Activated CD8-positive, alpha-beta T cell treated with anti-CD3 and anti-CD28 coated beads for 36 hours (primary cell): ENCODE measurements at regions of chr2 and their contacts with region 1.

Region 1: GRCh38 chr2:162301151-162301804 is 17.2 kb downstream of the IFIH1 start:
- DNase-seq: peak; percentile 69
- ATAC-seq: peak; percentile 69
- H3K4me3 Mint-ChIP-seq: no peak overlapping the region
- H3K27ac Mint-ChIP-seq: no peak overlapping the region
- H3K4me1 Mint-ChIP-seq: no peaks in the 10 kb centered on the region
- H3K27me3 Mint-ChIP-seq: no peaks in the 10 kb centered on the region
- CTCF ChIP-seq: peak; percentile 93

Region 2: DNA sequence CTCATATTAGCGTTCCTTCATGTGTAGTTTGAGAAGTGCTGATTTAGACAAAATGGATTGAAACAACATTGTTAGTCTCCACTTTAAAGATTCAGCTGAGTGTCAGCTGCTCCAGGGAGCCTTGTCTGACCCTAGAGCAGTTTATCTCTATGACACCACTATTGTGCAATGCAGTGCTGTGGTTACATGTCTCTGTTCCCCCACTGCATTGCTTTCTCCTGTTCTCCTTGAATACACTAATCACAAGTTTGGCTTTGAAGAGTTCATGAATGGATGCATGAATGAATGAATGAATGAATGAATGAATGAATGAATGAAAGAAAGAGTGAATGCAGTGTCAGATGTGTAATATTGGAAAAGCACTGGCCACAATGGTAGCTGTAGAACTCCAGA is 187.5 kb before region 1 on chr2:
- CTCF ChIA-PET with region 1: no interaction called
- POLR2A ChIA-PET with region 1: no interaction called
- intact Hi-C with region 1: no loop called
- DNase-seq: no peak
- ATAC-seq: no peak
- H3K4me3 Mint-ChIP-seq: no peak overlapping the region
- H3K27ac Mint-ChIP-seq: no peak overlapping the region
- H3K4me1 Mint-ChIP-seq: peaks cover 3% of the 10 kb centered on the region
- H3K27me3 Mint-ChIP-seq: no peaks in the 10 kb centered on the region
- CTCF ChIP-seq: no peak

Region 3: DNA sequence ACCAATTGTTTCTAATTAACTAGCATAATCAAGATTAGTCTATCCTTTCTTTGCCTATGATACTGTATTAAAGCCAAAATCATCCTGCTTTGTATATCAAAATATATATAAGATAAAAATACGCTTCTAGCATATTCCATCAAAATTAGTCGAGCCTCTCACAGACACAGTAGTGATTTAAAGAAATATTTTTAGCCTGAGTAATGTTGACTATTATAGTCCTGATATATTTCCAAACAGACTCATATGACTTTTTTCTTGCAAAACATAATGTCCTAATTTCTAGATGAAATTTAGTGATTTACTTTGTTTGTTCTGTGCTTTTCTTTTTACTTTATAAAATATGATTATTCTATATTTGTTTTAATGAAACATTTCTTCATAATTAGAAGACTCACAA is 88.9 kb before region 1 on chr2:
- CTCF ChIA-PET with region 1: interaction called, 292 read pairs
- POLR2A ChIA-PET with region 1: no interaction called
- intact Hi-C with region 1: no loop called
- DNase-seq: no peak
- ATAC-seq: no peak
- H3K4me3 Mint-ChIP-seq: no peak overlapping the region
- H3K27ac Mint-ChIP-seq: no peak overlapping the region
- H3K4me1 Mint-ChIP-seq: no peaks in the 10 kb centered on the region
- H3K27me3 Mint-ChIP-seq: peaks cover 5% of the 10 kb centered on the region
- CTCF ChIP-seq: no peak

Region 4: GRCh38 chr2:162233197-162233596 is 68.1 kb before region 1 on chr2:
- CTCF ChIA-PET with region 1: interaction called, 15 read pairs
- POLR2A ChIA-PET with region 1: no interaction called
- intact Hi-C with region 1: no loop called
- DNase-seq: no peak
- ATAC-seq: no peak
- H3K4me3 Mint-ChIP-seq: no peak overlapping the region
- H3K27ac Mint-ChIP-seq: no peak overlapping the region
- H3K4me1 Mint-ChIP-seq: no peaks in the 10 kb centered on the region
- H3K27me3 Mint-ChIP-seq: peaks cover 9% of the 10 kb centered on the region
- CTCF ChIP-seq: no peak

Region 5: GRCh38 chr2:162282765-162283425 is 18.4 kb before region 1 on chr2:
- CTCF ChIA-PET with region 1: interaction called, 21 read pairs
- POLR2A ChIA-PET with region 1: no interaction called
- intact Hi-C with region 1: no loop called
- DNase-seq: no peak
- ATAC-seq: no peak
- H3K4me3 Mint-ChIP-seq: no peak overlapping the region
- H3K27ac Mint-ChIP-seq: no peak overlapping the region
- H3K4me1 Mint-ChIP-seq: no peaks in the 10 kb centered on the region
- H3K27me3 Mint-ChIP-seq: no peaks in the 10 kb centered on the region
- CTCF ChIP-seq: no peak

Region 6: GRCh38 chr2:162333968-162334367 is 32.7 kb after region 1 on chr2:
- CTCF ChIA-PET with region 1: interaction called, 10 read pairs
- POLR2A ChIA-PET with region 1: no interaction called
- intact Hi-C with region 1: no loop called
- DNase-seq: peak; percentile 52
- ATAC-seq: peak; percentile 42
- H3K4me3 Mint-ChIP-seq: no peak overlapping the region
- H3K27ac Mint-ChIP-seq: no peak overlapping the region
- H3K4me1 Mint-ChIP-seq: no peaks in the 10 kb centered on the region
- H3K27me3 Mint-ChIP-seq: no peaks in the 10 kb centered on the region
- CTCF ChIP-seq: peak; percentile 59

Region 7: GRCh38 chr2:162449471-162449870 is 148.2 kb after region 1 on chr2:
- CTCF ChIA-PET with region 1: no interaction called
- POLR2A ChIA-PET with region 1: no interaction called
- intact Hi-C with region 1: no loop called
- DNase-seq: no peak
- ATAC-seq: no peak
- H3K4me3 Mint-ChIP-seq: no peak overlapping the region
- H3K27ac Mint-ChIP-seq: no peak overlapping the region
- H3K4me1 Mint-ChIP-seq: no peaks in the 10 kb centered on the region
- H3K27me3 Mint-ChIP-seq: peaks cover 2% of the 10 kb centered on the region
- CTCF ChIP-seq: no peak